Aorta (tissue), 5 donors: ENCODE measurements at regions of chr1 and their contacts with region 1.

Region 1: DNA sequence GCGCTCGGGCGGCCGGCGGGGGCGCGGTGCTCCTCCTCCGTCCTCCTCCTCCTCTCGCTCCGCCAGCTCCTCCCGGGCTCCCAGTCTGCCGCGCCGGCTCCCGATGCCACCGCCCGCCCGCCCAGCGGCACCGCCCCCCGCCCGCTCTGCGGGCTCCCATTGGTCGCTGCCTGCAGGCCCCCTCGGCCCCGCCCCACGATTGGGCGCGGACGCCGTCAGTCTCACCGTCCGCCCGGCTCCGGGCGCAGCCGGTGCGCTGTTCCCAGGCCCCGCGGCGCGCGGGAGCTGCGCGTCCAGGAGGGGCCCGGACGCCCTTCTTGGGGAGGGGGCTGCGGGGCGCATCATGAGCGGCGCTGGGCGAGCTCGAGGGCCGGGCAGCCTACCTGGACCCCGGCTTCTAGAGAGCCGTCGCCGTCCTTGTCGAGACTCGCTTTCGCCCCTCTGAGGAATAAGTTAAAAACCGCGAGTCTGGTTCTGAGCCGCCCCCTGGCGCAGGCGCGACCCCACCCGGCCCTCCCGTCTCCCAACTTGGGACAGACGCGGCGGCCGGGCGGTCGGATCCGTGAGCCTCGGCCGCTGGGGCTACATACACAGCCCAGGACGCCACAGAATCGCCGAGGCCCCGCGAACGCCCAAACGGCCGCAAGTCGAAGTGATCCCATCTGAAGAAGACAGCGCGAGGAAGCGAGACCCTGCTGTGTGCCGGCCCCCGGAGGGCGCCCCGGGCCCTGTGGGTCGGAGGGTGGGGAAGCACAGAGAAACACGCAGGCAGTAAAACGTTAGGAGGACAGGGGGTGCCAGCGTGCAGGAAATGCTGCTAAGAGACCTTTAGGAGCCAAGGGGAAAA is at the start of gene SIPA1L2:
- DNase-seq: peak; percentile 96 to 98
- ATAC-seq: peak; percentile 98
- H3K4me3 ChIP-seq: peak within 1 kb of the TSS; percentile 61 to 81
- H3K27ac ChIP-seq: peak within 1 kb of the TSS; percentile 46 to 60
- H3K4me1 ChIP-seq: no peaks in the 10 kb centered on the region
- H3K27me3 ChIP-seq: no peaks in the 10 kb centered on the region
- total RNA-seq, gene SIPA1L2: 11.3 to 27.6 TPM

Region 2: DNA sequence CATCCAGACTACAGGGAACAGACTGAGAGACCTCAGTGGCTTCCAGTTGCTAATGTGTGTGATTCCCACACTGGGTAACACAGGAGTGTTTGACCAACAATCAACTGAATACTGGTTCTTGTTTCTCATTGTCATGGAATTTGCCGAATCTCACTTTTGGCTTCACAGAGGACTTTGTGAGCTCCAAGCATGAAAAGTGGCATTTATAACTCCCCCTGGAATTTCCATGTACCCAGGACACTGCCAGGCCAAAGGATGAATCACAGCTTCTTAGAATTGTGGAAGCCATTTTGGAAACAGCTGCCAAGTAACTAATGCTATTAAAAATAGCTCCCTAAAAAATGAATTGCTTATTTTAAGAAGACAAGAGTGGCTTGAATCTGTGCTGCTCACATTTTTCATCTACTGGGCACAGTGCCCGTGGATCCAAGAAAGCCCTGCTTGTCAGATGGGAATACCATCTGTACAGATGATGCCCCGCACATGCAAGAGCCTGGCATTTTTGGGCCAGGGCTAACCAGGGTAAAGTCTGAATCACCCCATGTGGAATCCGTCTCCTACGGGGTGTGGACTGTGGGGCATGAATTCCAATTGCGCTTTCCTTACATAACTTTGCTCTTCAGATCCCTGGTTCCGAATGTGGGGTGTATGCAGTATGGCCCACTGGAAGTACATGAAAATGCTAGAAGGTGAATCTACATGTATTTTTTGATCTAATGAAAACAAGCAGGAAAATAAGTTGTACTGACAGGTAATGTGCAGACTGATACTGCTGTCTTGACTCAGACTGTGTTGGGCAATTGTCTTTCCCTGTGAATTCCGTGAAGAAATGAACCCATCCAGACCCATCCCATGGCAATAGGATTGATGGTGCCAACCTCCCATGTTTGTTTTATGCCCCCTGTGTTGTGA is 487.6 kb before region 1 on chr1:
- intact Hi-C with region 1: loop called (anchors 10 kb)
- DNase-seq: peak; percentile 84
- ATAC-seq: peak; percentile 86
- H3K4me3 ChIP-seq: no peak overlapping the region
- H3K27ac ChIP-seq: peak overlapping the region; percentile 57 to 90
- H3K4me1 ChIP-seq: peaks cover 3 to 8% of the 10 kb centered on the region in 2 donors
- H3K27me3 ChIP-seq: no peaks in the 10 kb centered on the region

Region 3: DNA sequence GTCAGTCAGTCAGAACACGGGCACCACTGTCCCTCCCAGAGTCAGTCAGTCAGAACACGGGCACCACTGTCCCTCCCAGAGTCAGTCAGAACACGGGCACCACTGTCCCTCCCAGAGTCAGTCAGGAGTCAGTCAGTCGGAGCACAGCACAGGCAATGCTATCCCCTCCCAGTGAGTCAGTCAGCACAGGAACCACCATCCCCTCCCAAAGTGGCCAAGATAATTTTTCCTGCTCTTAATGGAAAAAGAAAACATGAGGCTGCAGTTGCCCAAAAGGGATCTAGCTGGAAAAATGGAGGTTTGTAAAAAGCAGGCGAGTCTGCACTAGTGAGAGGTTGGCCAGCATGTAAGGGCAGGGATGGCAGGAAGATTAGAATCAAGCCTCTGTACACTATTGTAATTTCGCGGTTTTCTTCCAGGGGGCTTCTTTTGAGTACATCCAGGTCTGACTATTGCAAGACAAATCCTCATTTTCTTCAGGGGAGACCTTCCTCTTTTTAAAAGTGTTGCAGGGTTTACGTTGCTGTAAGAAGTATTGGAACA is 214.2 kb before region 1 on chr1:
- intact Hi-C with region 1: loop called in 1 of 2 experiments (anchors 10 kb)
- DNase-seq: no peak
- ATAC-seq: no peak
- H3K4me3 ChIP-seq: peak overlapping the region in 1 of 2 donors; percentile 4
- H3K27ac ChIP-seq: peak overlapping the region in 1 of 2 donors; percentile 28
- H3K4me1 ChIP-seq: no peaks in the 10 kb centered on the region
- H3K27me3 ChIP-seq: no peaks in the 10 kb centered on the region

Region 4: GRCh38 chr1:232553050-232553754 is 77.1 kb before region 1 on chr1:
- intact Hi-C with region 1: loop called in 1 of 2 experiments (anchors 5 kb)
- DNase-seq: peak in 1 of 2 donors; percentile 66
- ATAC-seq: no peak
- H3K4me3 ChIP-seq: no peak overlapping the region
- H3K27ac ChIP-seq: peak overlapping the region; percentile 43 to 69
- H3K4me1 ChIP-seq: peaks cover 0 to 17% of the 10 kb centered on the region in 2 donors
- H3K27me3 ChIP-seq: no peaks in the 10 kb centered on the region

Region 5: DNA sequence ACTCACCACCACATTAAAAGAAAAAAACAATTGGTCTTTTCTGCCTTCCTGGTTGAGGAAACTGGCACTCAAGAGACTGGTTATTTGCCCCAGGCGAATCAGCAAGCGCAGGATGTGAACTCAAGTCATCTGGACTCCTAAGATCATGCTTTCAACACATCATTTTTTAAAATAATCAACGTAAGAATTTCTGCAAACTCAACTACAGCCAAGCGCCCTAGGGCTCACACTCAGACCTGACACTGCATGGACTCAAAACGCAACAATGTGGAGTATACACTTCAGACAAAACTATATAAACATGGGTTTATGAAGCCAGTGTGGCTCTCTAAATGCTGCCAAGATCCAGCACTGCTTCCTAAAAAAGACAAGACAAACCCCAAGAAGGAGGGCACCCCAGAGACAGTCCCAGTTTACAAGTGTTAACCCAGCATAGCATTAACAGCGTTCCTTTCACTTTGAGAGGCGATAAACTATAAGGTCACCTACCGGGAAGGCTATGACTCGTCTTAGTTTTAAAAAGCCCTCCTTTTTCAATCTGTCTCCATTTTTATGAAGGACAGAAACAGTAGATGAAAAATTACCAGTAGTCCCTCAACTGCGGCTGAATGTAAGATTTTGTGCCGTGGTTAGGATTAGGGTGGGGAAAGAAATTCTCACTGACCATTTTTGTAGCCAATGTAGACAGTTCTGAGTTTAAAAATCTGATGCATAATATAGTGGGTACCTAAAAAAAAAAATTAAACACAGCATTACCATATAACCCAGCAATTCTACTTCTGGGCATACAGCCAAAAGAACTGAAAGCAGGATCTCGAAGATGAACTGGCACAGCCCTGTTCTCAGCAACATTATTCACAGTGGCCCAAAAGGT is 55.1 kb before region 1 on chr1:
- intact Hi-C with region 1: no loop called
- DNase-seq: no peak
- ATAC-seq: no peak
- H3K4me3 ChIP-seq: peak overlapping the region in 1 of 2 donors; percentile 23
- H3K27ac ChIP-seq: no peak overlapping the region
- H3K4me1 ChIP-seq: no peaks in the 10 kb centered on the region
- H3K27me3 ChIP-seq: no peaks in the 10 kb centered on the region

Region 6: GRCh38 chr1:232690285-232690935 is 60.1 kb after region 1 on chr1:
- intact Hi-C with region 1: no loop called
- DNase-seq: peak in 1 of 2 donors; percentile 69
- ATAC-seq: peak; percentile 65
- H3K4me3 ChIP-seq: no peak overlapping the region
- H3K27ac ChIP-seq: no peak overlapping the region
- H3K4me1 ChIP-seq: no peaks in the 10 kb centered on the region
- H3K27me3 ChIP-seq: peaks cover 0 to 2% of the 10 kb centered on the region in 2 donors

Region 7: GRCh38 chr1:232943679-232944252 is 313.5 kb after region 1 on chr1:
- intact Hi-C with region 1: loop called in 1 of 2 experiments (anchors 10 kb)
- DNase-seq: no peak
- ATAC-seq: no peak
- H3K4me3 ChIP-seq: no peak overlapping the region
- H3K27ac ChIP-seq: no peak overlapping the region
- H3K4me1 ChIP-seq: no peaks in the 10 kb centered on the region
- H3K27me3 ChIP-seq: peaks cover 0 to 6% of the 10 kb centered on the region in 2 donors

Region 8: DNA sequence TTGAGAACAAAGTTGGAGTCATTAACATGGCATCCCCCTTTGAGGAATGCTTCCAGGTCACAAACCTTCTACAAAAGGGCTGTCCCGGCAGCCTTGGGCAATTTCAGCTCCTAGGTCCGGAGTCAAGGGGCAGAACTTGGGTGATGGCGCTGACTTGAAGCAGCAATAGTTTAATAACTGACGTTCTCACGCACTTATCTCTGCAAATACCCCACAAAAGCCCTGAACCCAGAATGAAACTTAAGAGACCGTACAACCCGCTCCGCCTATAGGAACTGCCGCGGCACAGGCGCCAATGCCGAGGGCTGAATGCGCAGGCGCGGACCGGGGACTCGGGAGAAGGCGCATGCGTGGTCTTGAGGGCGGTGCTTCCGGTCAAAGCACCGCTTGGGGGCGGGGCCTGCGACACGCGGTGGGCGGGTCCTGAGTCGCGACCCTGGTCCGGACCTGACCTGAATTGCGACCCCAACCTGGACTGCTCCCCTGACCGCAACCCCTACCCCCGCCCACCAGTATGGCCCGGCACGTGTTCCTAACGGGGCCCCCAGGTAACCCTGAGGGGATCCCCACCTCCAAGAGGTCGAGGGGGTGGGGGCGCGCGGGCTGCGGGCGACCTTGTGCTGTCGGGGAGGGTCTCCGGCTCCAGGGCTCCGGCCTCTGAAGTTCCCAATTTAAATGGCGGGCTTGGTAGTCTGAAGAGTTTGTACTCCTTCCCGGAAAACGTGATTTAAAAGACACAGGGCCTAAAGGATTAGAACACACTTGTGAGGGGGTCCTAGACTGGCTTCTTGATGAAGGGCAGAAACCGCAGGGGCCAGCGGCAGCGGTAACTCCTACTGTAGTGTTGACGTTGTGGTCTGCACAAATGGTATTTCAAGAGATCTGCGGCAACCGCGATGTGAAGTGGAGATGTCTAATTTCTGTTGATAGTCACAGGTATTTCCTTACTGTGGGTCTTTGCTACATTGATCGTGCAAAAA is 320.2 kb after region 1 on chr1 and contains the start of gene NTPCR:
- intact Hi-C with region 1: loop called (anchors 10 kb)
- DNase-seq: peak; percentile 95 to 99
- ATAC-seq: peak; percentile 96
- H3K4me3 ChIP-seq: peak within 1 kb of the TSS; percentile 67 to 73
- H3K27ac ChIP-seq: peak within 1 kb of the TSS in 1 of 2 donors; percentile 34
- H3K4me1 ChIP-seq: no peaks in the 10 kb centered on the region
- H3K27me3 ChIP-seq: no peaks in the 10 kb centered on the region
- total RNA-seq, gene NTPCR: 21.3 to 31.3 TPM

Region 9: DNA sequence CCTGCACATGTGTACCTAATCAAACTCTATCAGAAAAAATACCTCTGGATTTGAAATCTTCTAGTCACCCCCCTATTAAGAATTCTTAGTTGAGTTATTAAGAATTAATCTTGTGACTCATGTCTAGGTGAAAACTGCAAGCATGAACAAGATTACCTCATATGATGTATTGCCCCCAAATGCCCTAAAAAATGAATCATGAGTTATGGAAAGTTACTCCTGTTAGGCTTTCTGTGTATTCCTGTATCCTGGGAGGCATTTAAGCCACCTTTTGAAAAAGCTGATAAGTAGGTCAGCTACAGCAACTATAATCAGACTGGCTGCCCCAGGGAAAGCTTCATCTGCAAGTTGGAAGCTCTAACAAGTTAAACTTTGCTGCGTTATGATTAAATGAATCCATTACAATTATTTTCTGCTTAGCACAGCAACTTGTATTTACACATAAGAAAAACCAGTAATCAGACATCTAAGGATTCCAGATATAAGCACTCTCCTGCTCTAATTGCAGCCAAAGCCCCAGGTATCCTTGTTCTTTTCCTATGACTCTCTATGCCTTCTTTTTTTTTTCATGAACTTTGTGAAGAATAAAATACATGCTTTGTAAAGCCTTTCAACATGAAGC is 467.8 kb after region 1 on chr1:
- intact Hi-C with region 1: no loop called
- DNase-seq: no peak
- ATAC-seq: no peak
- H3K4me3 ChIP-seq: no peak overlapping the region
- H3K27ac ChIP-seq: no peak overlapping the region
- H3K4me1 ChIP-seq: no peaks in the 10 kb centered on the region
- H3K27me3 ChIP-seq: no peaks in the 10 kb centered on the region